Activated T-helper 2 cell treated with anti-CD3 and anti-CD28 coated beads, Interferon-gamma antibody, Interleukin-2, Interleukin-4, amounts not matched to agents 10 μg/mL and 5 μg/mL and 100 μg/mL, durations not matched to agents 14 hours and 24 hours and 36 hours (primary cell): ENCODE measurements at regions of chr11 and their contacts with region 1.

Region 1: GRCh38 chr11:48020092-48020755 is 39.9 kb downstream of the PTPRJ start:
- DNase-seq: no peak
- H3K4me3 Mint-ChIP-seq: peak overlapping the region; percentile 57
- H3K27ac Mint-ChIP-seq: peak overlapping the region; percentile 89
- H3K4me1 Mint-ChIP-seq: peaks cover 71% of the 10 kb centered on the region
- H3K27me3 Mint-ChIP-seq: no peaks in the 10 kb centered on the region

Region 2: GRCh38 chr11:47797633-47798032 is 222.6 kb before region 1 on chr11:
- intact Hi-C with region 1: no loop called
- DNase-seq: peak; percentile 19
- H3K4me3 Mint-ChIP-seq: no peak overlapping the region
- H3K27ac Mint-ChIP-seq: peak overlapping the region; percentile 82
- H3K4me1 Mint-ChIP-seq: peaks cover 14% of the 10 kb centered on the region
- H3K27me3 Mint-ChIP-seq: no peaks in the 10 kb centered on the region

Region 3: DNA sequence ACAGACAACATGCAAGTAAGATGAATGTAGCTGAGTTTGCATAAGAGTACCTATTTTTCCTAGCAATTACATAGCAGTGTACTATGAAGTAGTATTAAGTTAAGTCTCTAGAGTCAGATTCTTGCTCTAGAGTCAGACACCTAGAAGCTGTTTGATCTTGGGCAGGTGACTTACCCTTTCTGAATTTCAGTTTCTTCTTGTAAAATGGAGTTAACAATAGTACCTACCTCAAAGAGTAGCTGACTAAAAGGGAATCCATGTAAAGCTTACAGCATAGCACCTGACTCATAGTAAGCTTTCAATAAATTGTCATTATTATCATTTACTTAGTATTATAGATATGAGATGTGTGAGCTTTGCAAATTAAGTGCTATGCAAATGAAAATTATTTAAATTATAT is 87.7 kb before region 1 on chr11:
- intact Hi-C with region 1: loop called (anchors 1 kb)
- DNase-seq: no peak
- H3K4me3 Mint-ChIP-seq: no peak overlapping the region
- H3K27ac Mint-ChIP-seq: no peak overlapping the region
- H3K4me1 Mint-ChIP-seq: peaks cover 20% of the 10 kb centered on the region
- H3K27me3 Mint-ChIP-seq: no peaks in the 10 kb centered on the region

Region 4: GRCh38 chr11:47980245-47981049 is 39.8 kb before region 1 on chr11 and contains the start of gene PTPRJ:
- intact Hi-C with region 1: loop called (anchors 5 kb)
- DNase-seq: peak; percentile 59
- H3K4me3 Mint-ChIP-seq: peak within 1 kb of the TSS; percentile 95
- H3K27ac Mint-ChIP-seq: peak within 1 kb of the TSS; percentile 34
- H3K4me1 Mint-ChIP-seq: peaks cover 24% of the 10 kb centered on the region
- H3K27me3 Mint-ChIP-seq: peaks cover 10% of the 10 kb centered on the region
- total RNA-seq, gene PTPRJ: 50.9 and 53.2 TPM in 2 replicates

Region 5: DNA sequence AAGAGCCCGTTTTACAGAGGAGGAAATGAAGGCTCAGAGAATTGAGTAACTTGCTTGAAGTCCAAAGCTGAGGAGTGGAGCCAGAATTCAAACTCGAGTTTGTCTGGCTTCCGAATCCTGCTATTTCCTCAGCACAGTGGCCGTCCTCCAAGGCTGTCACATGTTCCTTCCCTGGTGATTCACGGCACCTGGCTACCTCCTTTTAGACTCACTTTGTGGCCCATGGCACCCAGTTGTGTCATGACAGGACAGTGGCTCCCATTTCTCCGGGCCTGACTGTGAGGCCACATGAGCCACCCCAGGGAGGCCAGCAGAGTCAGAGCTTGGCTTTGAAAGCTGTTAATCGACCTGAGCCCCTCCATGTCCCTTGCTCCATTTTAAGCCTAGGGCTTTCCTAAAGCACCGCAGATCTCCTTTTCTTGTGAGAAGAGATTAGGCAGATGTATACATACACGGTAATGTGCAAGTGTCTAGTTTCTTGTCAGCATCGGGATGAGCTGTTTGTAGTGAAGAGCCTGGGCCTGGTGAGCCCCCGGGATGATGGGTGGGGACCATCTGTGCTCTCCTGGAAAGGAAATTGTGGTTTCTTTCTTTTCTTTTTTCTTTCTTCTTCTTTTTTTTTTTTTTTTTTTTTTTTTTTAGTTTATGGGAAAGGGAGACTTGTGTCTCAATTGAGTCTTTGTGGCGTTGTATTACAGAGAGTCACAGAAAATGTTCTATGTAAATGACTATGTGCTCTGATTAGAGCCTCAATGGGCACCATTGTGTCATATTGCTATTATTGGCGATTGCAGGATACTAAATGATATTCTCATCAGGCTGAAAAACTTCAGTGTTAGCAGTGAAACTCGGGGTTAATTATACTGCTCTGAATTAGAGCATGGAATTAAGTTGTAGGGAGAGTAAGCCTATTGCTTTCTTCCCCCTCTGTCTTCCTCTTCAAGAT is 15.0 kb after region 1 on chr11:
- intact Hi-C with region 1: loop called (anchors 2 kb)
- DNase-seq: no peak
- H3K4me3 Mint-ChIP-seq: peak overlapping the region; percentile 3
- H3K27ac Mint-ChIP-seq: peak overlapping the region; percentile 34
- H3K4me1 Mint-ChIP-seq: peaks cover 63% of the 10 kb centered on the region
- H3K27me3 Mint-ChIP-seq: no peaks in the 10 kb centered on the region